Activated CD4-positive, alpha-beta T cell treated with anti-CD3 and anti-CD28 coated beads for 36 hours (primary cell): ENCODE measurements at regions of chr4 and their contacts with region 1.

Region 1: GRCh38 chr4:27318743-27319142 is 458.1 kb downstream of the STIM2 start:
- DNase-seq: peak; percentile 45
- ATAC-seq: peak; percentile 44
- H3K4me3 Mint-ChIP-seq: no peak overlapping the region
- H3K27ac Mint-ChIP-seq: no peak overlapping the region
- H3K4me1 Mint-ChIP-seq: no peaks in the 10 kb centered on the region
- H3K27me3 Mint-ChIP-seq: peaks cover 9% of the 10 kb centered on the region

Region 2: GRCh38 chr4:26622913-26623312 is 695.8 kb before region 1 on chr4:
- CTCF ChIA-PET with region 1: no interaction called
- POLR2A ChIA-PET with region 1: no interaction called
- intact Hi-C with region 1: no loop called
- DNase-seq: no peak
- ATAC-seq: no peak
- H3K4me3 Mint-ChIP-seq: no peak overlapping the region
- H3K27ac Mint-ChIP-seq: no peak overlapping the region
- H3K4me1 Mint-ChIP-seq: no peaks in the 10 kb centered on the region
- H3K27me3 Mint-ChIP-seq: no peaks in the 10 kb centered on the region

Region 3: DNA sequence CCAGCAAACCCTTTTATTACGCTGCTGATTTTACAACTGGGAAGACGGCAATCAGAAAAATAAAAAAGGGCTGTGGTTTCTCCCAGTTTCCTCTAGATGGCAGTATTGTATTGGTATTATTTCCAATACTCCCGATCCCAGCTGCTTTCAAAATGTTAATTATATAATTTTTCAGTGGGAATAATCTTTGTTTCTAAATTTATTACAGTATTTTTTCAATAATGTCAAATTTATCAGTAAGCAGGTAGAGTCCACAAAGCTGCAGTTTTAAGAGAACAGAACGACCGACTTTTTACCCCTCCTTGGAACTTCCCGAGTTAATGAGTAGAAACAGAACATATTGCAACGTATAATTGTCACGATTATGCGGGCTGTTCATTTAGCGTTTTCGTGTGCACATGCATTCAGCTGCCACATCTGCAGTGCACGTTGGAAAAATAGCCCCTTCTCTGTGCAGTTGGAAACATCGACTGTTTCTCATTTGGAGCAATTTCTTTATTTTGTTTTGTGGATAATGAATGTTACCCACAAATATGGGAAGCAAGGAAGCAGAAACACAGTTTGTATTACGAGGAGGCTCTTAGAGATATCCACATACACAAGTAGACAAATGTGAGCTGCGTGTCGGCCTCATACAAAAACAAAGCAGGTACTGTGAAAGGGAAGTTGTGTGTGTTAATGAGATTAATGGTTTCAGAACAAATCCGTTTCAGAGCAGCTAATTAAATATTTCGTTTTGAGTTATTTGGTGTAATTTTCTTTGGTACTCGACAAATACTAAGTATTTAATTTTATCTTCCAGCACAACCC is 270.1 kb before region 1 on chr4:
- CTCF ChIA-PET with region 1: interaction called, 5 read pairs
- POLR2A ChIA-PET with region 1: no interaction called
- intact Hi-C with region 1: loop called (anchors 1 to 2 kb)
- DNase-seq: no peak
- ATAC-seq: no peak
- H3K4me3 Mint-ChIP-seq: no peak overlapping the region
- H3K27ac Mint-ChIP-seq: no peak overlapping the region
- H3K4me1 Mint-ChIP-seq: peaks cover 5% of the 10 kb centered on the region
- H3K27me3 Mint-ChIP-seq: peaks cover 25% of the 10 kb centered on the region